ENCODE measurements at regions of chr15 and their contacts with region 1.

Region 1: GRCh38 chr15:76973362-76973743 is 21.6 kb upstream of the PSTPIP1 start:
- DNase-seq: peak in 8 of 9 donors; percentile 26 to 65 (median 52)
- ATAC-seq: peak; percentile 71
- H3K4me3 ChIP-seq: no peak overlapping the region
- H3K4me3 Mint-ChIP-seq: no peak overlapping the region
- H3K27ac ChIP-seq: no peak overlapping the region
- H3K27ac Mint-ChIP-seq: peak overlapping the region in 1 of 9 donors; percentile 36
- H3K4me1 ChIP-seq: no peaks in the 10 kb centered on the region
- H3K4me1 Mint-ChIP-seq: peaks cover 6 to 35% (median 16%) of the 10 kb centered on the region in 7 donors
- H3K27me3 ChIP-seq: no peaks in the 10 kb centered on the region
- H3K27me3 Mint-ChIP-seq: peaks cover 0 to 6% (median 0%) of the 10 kb centered on the region in 5 donors

Region 2: GRCh38 chr15:76994971-76995945 is 21.9 kb after region 1 on chr15 and contains the start of gene PSTPIP1:
- CTCF ChIA-PET with region 1: interaction called, 14 read pairs
- POLR2A ChIA-PET with region 1: interaction called, 8 read pairs
- intact Hi-C with region 1: loop called (anchors 2 kb)
- DNase-seq: peak; percentile 52 to 79 (median 74)
- ATAC-seq: peak; percentile 83
- H3K4me3 ChIP-seq: peak within 1 kb of the TSS; percentile 90
- H3K4me3 Mint-ChIP-seq: peak within 1 kb of the TSS; percentile 93 to 99 (median 96)
- H3K27ac ChIP-seq: peak within 1 kb of the TSS; percentile 80
- H3K27ac Mint-ChIP-seq: peak within 1 kb of the TSS; percentile 88 to 98 (median 96)
- H3K4me1 ChIP-seq: peaks cover 57 to 58% of the 10 kb centered on the region in 2 donors
- H3K4me1 Mint-ChIP-seq: peaks cover 61 to 76% (median 65%) of the 10 kb centered on the region in 7 donors
- H3K27me3 ChIP-seq: no peaks in the 10 kb centered on the region
- H3K27me3 Mint-ChIP-seq: no peaks in the 10 kb centered on the region
- total RNA-seq, gene PSTPIP1: 101 to 182 (median 146) TPM

Region 3: DNA sequence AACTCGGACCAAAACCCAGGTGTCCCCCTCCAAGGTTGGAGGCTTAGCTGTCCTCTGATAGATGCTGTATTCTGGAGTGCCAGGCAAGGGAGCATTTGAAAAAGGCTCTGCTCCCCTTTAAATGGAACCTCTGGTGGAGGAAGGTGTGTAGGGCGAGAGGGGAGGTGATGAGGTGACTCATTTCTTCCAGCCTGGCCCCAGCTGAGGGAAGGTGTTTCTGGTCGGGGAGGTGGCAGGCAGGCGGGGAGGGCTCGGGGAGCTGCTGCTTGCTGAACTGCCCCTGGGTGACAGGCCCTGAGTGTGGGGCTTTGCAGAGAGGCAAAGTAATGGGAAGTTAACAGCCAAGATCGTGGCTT is 40.4 kb after region 1 on chr15:
- CTCF ChIA-PET with region 1: interaction called, 10 read pairs
- POLR2A ChIA-PET with region 1: interaction called, 3 read pairs
- intact Hi-C with region 1: loop called in 1 of 2 experiments (anchors 1 kb)
- DNase-seq: peak in 5 of 9 donors; percentile 45 to 82 (median 49)
- ATAC-seq: peak; percentile 73
- H3K4me3 ChIP-seq: peak overlapping the region; percentile 43
- H3K4me3 Mint-ChIP-seq: peak overlapping the region; percentile 64 to 91 (median 77)
- H3K27ac ChIP-seq: peak overlapping the region; percentile 58
- H3K27ac Mint-ChIP-seq: peak overlapping the region; percentile 76 to 97 (median 95)
- H3K4me1 ChIP-seq: peaks cover 62 to 99% of the 10 kb centered on the region in 2 donors
- H3K4me1 Mint-ChIP-seq: peaks cover 58 to 93% (median 75%) of the 10 kb centered on the region in 7 donors
- H3K27me3 ChIP-seq: no peaks in the 10 kb centered on the region
- H3K27me3 Mint-ChIP-seq: no peaks in the 10 kb centered on the region

Region 4: GRCh38 chr15:77031376-77032050 is 58.2 kb after region 1 on chr15:
- CTCF ChIA-PET with region 1: interaction called, 18 read pairs
- POLR2A ChIA-PET with region 1: no interaction called
- intact Hi-C with region 1: loop called in 1 of 2 experiments (anchors 1 kb)
- DNase-seq: peak in 4 of 9 donors; percentile 5 to 40 (median 26)
- ATAC-seq: peak; percentile 60
- H3K4me3 ChIP-seq: no peak overlapping the region
- H3K4me3 Mint-ChIP-seq: no peak overlapping the region
- H3K27ac ChIP-seq: no peak overlapping the region
- H3K27ac Mint-ChIP-seq: peak overlapping the region in 4 of 9 donors; percentile 36 to 59 (median 42)
- H3K4me1 ChIP-seq: no peaks in the 10 kb centered on the region
- H3K4me1 Mint-ChIP-seq: peaks cover 0 to 21% (median 6%) of the 10 kb centered on the region in 7 donors
- H3K27me3 ChIP-seq: no peaks in the 10 kb centered on the region
- H3K27me3 Mint-ChIP-seq: no peaks in the 10 kb centered on the region

Region 5: DNA sequence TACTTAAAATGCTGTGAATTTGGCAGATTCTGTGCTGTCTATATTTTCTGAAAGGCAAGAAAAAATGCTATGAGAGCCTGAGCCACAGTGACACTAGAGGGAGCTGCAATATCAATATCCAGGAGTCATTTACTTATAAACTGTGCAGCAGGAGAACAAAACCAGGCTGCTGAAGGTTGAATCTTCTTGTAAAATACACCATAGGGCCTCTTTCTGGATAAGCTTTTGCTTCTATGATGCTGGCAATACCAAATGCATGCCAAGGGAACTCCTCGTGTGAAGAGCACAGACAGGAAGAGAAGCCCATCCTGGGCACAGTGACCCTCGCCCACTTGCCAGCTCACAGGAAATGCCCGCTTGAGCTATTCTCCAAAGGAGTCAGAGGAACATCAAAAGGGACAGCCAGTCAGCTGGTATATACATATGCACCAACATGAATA is 145.5 kb after region 1 on chr15:
- CTCF ChIA-PET with region 1: interaction called, 5 read pairs
- POLR2A ChIA-PET with region 1: no interaction called
- intact Hi-C with region 1: loop called in 1 of 2 experiments (anchors 1 kb)
- DNase-seq: peak in 7 of 9 donors; percentile 19 to 63 (median 47)
- ATAC-seq: peak; percentile 70
- H3K4me3 ChIP-seq: no peak overlapping the region
- H3K4me3 Mint-ChIP-seq: no peak overlapping the region
- H3K27ac ChIP-seq: no peak overlapping the region
- H3K27ac Mint-ChIP-seq: no peak overlapping the region
- H3K4me1 ChIP-seq: no peaks in the 10 kb centered on the region
- H3K4me1 Mint-ChIP-seq: peaks cover 0 to 12% (median 6%) of the 10 kb centered on the region in 7 donors
- H3K27me3 ChIP-seq: no peaks in the 10 kb centered on the region
- H3K27me3 Mint-ChIP-seq: no peaks in the 10 kb centered on the region

Region 6: DNA sequence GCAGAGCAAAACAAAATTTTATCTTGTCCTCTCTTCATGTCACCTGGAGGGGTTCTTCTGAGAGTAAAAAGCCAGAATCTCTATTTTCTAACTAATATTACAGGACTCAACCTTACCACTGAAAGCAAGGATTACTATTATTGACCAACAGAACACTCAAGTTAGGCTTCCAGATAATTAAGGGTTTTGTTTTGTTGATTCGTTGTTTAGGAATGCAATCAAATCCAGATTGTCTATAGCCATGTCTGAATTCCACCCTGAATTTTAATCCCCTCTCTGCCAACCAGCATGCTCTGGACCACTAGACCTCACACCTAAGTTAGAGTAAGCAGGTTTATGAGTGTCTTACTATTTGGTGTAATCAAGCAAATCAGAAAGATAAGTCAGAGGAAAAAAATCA is 355.8 kb after region 1 on chr15:
- CTCF ChIA-PET with region 1: no interaction called
- POLR2A ChIA-PET with region 1: no interaction called
- intact Hi-C with region 1: no loop called
- DNase-seq: no peak
- ATAC-seq: no peak
- H3K4me3 ChIP-seq: no peak overlapping the region
- H3K4me3 Mint-ChIP-seq: no peak overlapping the region
- H3K27ac ChIP-seq: no peak overlapping the region
- H3K27ac Mint-ChIP-seq: no peak overlapping the region
- H3K4me1 ChIP-seq: no peaks in the 10 kb centered on the region
- H3K4me1 Mint-ChIP-seq: peaks cover 0 to 2% (median 0%) of the 10 kb centered on the region in 7 donors
- H3K27me3 ChIP-seq: no peaks in the 10 kb centered on the region
- H3K27me3 Mint-ChIP-seq: no peaks in the 10 kb centered on the region

Region 7: DNA sequence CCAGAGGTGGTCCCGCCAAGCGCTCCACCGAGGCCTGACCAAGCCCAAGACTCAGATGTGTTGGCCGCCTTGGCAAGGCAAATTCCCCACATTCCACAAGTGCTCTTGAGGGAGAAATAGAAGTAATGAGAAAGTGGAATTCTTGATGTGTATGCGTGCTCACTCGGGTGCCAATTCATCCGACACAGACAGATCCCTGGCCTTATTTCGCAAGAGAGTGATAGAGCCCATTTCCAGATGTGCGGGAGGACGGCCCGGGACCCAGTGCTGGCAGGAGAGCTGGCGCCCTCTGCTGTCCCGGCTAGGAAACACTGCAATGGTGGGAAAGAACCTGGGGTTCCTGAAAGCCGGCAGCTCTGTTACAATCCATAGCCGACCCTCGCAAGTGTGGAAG is 523.4 kb after region 1 on chr15:
- CTCF ChIA-PET with region 1: interaction called, 6 read pairs
- POLR2A ChIA-PET with region 1: interaction called, 3 read pairs
- intact Hi-C with region 1: loop called (anchors 1 to 2 kb)
- DNase-seq: peak; percentile 37 to 76 (median 60)
- ATAC-seq: peak; percentile 84
- H3K4me3 ChIP-seq: no peak overlapping the region
- H3K4me3 Mint-ChIP-seq: no peak overlapping the region
- H3K27ac ChIP-seq: no peak overlapping the region
- H3K27ac Mint-ChIP-seq: no peak overlapping the region
- H3K4me1 ChIP-seq: peaks cover 3 to 5% of the 10 kb centered on the region in 2 donors
- H3K4me1 Mint-ChIP-seq: peaks cover 13 to 29% (median 24%) of the 10 kb centered on the region in 7 donors
- H3K27me3 ChIP-seq: no peaks in the 10 kb centered on the region
- H3K27me3 Mint-ChIP-seq: no peaks in the 10 kb centered on the region